Heart left ventricle (tissue), 16 donors: ENCODE measurements at regions of chr7 and their contacts with region 1.

Region 1: DNA sequence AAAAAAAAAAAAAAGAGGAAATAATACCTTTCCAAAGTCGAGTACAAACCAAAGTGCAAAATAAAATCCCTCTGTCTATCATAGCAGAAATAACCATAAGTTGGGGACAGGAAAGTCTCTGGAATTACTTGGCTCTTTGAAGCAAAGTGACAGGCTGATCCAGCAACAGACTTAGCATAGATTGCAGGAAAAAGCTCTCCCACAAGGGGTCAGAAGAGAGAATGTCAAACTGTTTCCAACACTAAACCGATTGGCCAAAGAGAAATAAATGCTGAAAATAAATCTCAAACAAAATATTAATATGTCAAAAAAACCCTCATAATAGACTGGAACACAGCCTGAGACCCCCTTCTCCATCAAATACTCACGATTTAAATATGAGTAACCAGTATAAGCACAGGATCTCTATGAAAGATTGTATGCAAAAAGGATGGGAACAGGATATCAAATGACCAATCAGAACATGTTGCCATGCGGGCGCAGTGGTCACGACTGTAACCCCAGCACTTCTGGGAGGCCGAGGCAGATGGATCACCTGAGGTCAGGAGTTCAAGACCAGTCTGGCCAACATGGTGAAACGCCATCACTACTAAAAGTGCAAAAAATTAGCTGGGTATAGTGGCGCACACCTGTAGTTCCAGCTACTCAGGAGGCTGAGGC is 1000.7 kb upstream of the LRRN3 start:
- DNase-seq: no peak
- ATAC-seq: no peak
- H3K4me3 ChIP-seq: no peak overlapping the region
- H3K27ac ChIP-seq: no peak overlapping the region
- H3K4me1 ChIP-seq: no peaks in the 10 kb centered on the region
- H3K27me3 ChIP-seq: no peaks in the 10 kb centered on the region
- CTCF ChIP-seq: peak in 6 of 12 donors; percentile 8 to 43 (median 24)
- POLR2A ChIP-seq: no peak

Region 2: DNA sequence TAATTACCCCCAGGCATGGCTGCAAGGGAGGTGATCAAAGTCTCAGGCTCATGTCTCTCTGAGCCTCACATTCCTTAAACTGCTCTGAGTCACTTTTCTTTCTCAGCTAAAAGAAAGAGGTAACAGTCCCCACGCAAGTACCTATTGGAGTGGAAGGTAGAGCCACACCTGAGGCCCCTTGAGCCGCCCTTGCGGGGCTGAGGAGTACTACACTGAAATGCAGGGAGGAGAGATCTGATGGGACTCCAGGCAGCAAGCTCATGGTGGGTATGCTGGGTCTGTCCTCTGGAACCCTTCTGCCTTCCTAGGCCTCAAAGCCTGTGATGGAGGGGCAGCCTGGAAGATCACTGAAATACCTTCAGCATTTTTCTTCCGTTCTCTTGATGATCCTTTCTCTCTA is 560.5 kb before region 1 on chr7:
- intact Hi-C with region 1: no loop called
- DNase-seq: no peak
- ATAC-seq: no peak
- H3K4me3 ChIP-seq: no peak overlapping the region
- H3K27ac ChIP-seq: no peak overlapping the region
- H3K4me1 ChIP-seq: peaks cover 0 to 6% (median 0%) of the 10 kb centered on the region in 12 donors
- H3K27me3 ChIP-seq: no peaks in the 10 kb centered on the region
- CTCF ChIP-seq: no peak
- POLR2A ChIP-seq: no peak

Region 3: GRCh38 chr7:111103678-111104274 is 1013.5 kb after region 1 on chr7:
- intact Hi-C with region 1: loop called in 1 of 10 experiments (anchors 10 kb)
- DNase-seq: no peak
- ATAC-seq: no peak
- H3K4me3 ChIP-seq: no peak overlapping the region
- H3K27ac ChIP-seq: no peak overlapping the region
- H3K4me1 ChIP-seq: peaks cover 0 to 10% (median 3%) of the 10 kb centered on the region in 12 donors
- H3K27me3 ChIP-seq: no peaks in the 10 kb centered on the region
- CTCF ChIP-seq: no peak
- POLR2A ChIP-seq: no peak